ENCODE measurements at regions of chr1 and their contacts with region 1.

Region 1: GRCh38 chr1:219566951-219567947 is 45.7 kb downstream of the ZC3H11B start:
- DNase-seq: peak; percentile 78
- H3K4me3 Mint-ChIP-seq: no peak overlapping the region
- H3K27ac Mint-ChIP-seq: no peak overlapping the region
- H3K4me1 Mint-ChIP-seq: no peaks in the 10 kb centered on the region
- H3K27me3 Mint-ChIP-seq: peaks cover 91% of the 10 kb centered on the region
- CTCF ChIP-seq: peak; percentile 85

Region 2: DNA sequence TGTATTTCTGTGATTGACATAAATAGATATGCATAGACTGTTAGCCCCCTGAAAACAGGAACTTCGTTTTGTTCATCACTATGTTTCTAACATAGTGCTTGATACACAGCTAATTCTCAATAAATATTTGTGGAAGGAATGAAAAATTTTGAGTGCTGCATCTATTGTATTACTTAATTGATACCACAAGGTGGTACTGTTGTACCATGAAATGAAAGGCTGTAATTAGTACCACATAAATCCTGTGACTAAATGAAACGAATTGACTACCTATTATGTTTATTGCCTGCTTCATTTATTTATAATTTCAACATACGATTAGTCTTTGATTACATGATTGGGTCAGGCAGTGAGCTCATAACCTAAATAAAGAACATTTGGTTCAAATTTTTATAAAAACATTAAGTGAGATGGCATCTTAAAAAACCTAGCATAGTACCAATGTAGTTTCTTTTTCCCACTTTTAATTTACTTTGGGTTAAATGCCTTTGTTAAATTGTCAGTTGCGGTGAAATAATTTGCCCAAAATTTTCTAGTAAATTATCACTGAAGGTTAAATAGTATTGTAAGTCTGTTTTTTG is 1237.1 kb before region 1 on chr1:
- CTCF ChIA-PET with region 1: interaction called, 12 read pairs
- POLR2A ChIA-PET with region 1: interaction called, 3 read pairs
- intact Hi-C with region 1: loop called (anchors 1 kb)
- DNase-seq: peak; percentile 67
- H3K4me3 Mint-ChIP-seq: no peak overlapping the region
- H3K27ac Mint-ChIP-seq: peak overlapping the region; percentile 55
- H3K4me1 Mint-ChIP-seq: no peaks in the 10 kb centered on the region
- H3K27me3 Mint-ChIP-seq: no peaks in the 10 kb centered on the region
- CTCF ChIP-seq: peak; percentile 84

Region 3: GRCh38 chr1:219209578-219209977 is 357.7 kb before region 1 on chr1:
- CTCF ChIA-PET with region 1: interaction called, 4 read pairs
- POLR2A ChIA-PET with region 1: no interaction called
- intact Hi-C with region 1: loop called (anchors 1 kb)
- DNase-seq: no peak
- H3K4me3 Mint-ChIP-seq: no peak overlapping the region
- H3K27ac Mint-ChIP-seq: no peak overlapping the region
- H3K4me1 Mint-ChIP-seq: no peaks in the 10 kb centered on the region
- H3K27me3 Mint-ChIP-seq: no peaks in the 10 kb centered on the region
- CTCF ChIP-seq: no peak

Region 4: GRCh38 chr1:219304227-219305226 is 262.7 kb before region 1 on chr1:
- CTCF ChIA-PET with region 1: interaction called, 4 read pairs
- POLR2A ChIA-PET with region 1: no interaction called
- intact Hi-C with region 1: loop called (anchors 1 kb)
- DNase-seq: peak; percentile 79
- H3K4me3 Mint-ChIP-seq: no peak overlapping the region
- H3K27ac Mint-ChIP-seq: no peak overlapping the region
- H3K4me1 Mint-ChIP-seq: peaks cover 11% of the 10 kb centered on the region
- H3K27me3 Mint-ChIP-seq: peaks cover 84% of the 10 kb centered on the region
- CTCF ChIP-seq: peak; percentile 49

Region 5: DNA sequence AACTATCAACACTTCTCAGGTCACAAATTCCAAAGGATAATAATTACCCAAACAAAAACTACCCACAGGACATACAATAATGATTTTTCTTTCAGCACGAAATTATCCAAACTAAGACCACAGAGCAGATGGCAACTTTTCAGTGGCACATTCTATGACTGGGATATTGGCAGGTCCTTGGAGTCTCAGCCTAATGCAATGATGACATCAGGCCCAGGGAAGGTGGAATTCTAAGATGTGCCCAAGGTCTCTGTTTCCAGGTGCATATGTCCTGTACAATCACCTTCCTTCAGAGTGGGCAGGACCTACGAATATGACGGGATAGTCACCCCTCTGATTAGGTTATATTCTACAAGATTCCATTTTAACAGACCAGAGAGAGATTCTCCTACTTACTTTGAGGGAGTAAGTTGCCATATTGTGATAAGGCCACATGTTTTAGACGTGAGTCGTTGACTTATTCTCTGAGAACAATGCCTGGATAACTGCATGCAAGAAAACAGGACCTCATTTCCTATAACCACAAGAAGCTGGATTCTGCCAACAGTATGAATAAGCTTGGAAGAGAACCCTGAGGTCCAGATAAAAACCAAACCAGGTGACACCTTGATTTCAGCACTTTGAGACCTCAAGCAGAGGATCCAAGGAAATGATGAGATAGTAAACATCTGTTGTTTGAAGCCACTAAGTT is 24.3 kb before region 1 on chr1:
- CTCF ChIA-PET with region 1: interaction called, 32 read pairs
- POLR2A ChIA-PET with region 1: no interaction called
- intact Hi-C with region 1: no loop called
- DNase-seq: no peak
- H3K4me3 Mint-ChIP-seq: no peak overlapping the region
- H3K27ac Mint-ChIP-seq: no peak overlapping the region
- H3K4me1 Mint-ChIP-seq: no peaks in the 10 kb centered on the region
- H3K27me3 Mint-ChIP-seq: peaks cover 76% of the 10 kb centered on the region
- CTCF ChIP-seq: no peak

Region 6: DNA sequence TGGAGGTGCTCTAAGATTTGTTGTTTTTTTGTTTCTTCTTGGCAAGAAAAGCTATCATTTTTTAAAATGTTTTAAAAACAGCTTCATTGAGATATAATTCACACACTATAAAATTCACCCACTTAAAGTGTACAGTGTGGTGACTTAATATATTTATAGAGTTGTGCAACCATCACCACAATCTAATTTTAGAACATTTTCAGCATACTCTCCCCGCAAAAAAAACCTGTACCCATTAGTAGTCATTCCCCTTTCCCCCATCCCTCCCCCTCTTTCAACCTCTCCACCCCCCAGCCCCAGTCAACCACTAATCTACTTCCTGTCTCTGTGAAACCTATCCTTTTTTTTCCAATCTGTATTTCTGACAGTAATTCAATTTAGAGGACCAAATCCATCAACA is 15.0 kb after region 1 on chr1:
- CTCF ChIA-PET with region 1: interaction called, 29 read pairs
- POLR2A ChIA-PET with region 1: no interaction called
- intact Hi-C with region 1: no loop called
- DNase-seq: peak; percentile 58
- H3K4me3 Mint-ChIP-seq: no peak overlapping the region
- H3K27ac Mint-ChIP-seq: no peak overlapping the region
- H3K4me1 Mint-ChIP-seq: peaks cover 7% of the 10 kb centered on the region
- H3K27me3 Mint-ChIP-seq: peaks cover 59% of the 10 kb centered on the region
- CTCF ChIP-seq: no peak

Measured in MCF 10A (cell line).